ENCODE measurements at regions of chr5 and their contacts with region 1.

Region 1: GRCh38 chr5:32074401-32074800 is 99.7 kb downstream of the GOLPH3 start:
- DNase-seq: no peak
- H3K4me3 ChIP-seq: no peak overlapping the region
- H3K27ac ChIP-seq: no peak overlapping the region
- H3K4me1 ChIP-seq: no peaks in the 10 kb centered on the region
- H3K27me3 ChIP-seq: no peaks in the 10 kb centered on the region
- CTCF ChIP-seq: no peak

Region 2: GRCh38 chr5:31839005-31839404 is 235.4 kb before region 1 on chr5:
- intact Hi-C with region 1: loop called (anchors 5 kb)
- DNase-seq: no peak
- H3K4me3 ChIP-seq: no peak overlapping the region
- H3K27ac ChIP-seq: no peak overlapping the region
- H3K4me1 ChIP-seq: no peaks in the 10 kb centered on the region
- H3K27me3 ChIP-seq: no peaks in the 10 kb centered on the region
- CTCF ChIP-seq: no peak